B cell (primary cell): ENCODE measurements at regions of chr6 and their contacts with region 1.

Region 1: DNA sequence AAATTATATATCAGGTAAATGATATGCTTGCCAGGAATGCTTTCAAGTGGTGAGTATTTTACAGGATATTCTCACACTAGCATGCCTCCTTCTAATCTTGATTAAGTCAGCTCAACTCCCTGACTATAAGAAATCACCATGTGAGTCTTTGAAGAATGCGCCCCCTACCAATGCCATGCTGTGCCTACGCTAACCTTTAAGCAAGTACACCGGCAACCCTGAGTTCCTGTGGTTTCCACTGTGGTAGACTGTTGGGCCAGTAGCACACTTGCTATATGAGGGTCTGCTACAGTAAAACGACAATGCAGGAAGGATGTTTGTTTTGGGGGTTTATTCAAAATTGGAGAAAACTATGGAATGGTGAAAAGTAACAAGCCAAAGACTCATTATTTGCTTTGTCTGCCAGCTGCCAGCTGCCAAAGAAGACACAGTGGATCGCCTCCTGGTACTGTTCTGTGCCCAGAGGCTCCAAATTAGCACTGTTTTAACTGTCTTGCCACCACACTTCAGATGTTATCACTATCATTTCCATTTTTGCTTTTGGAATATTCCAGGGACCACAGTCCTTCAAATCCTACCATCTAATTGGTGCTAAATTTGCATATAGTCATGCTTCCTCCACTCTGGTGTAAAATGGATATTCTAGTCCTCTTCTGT is 333.5 kb downstream of the RNGTT start:
- DNase-seq: peak; percentile 59
- ATAC-seq: peak; percentile 33
- H3K4me3 ChIP-seq: no peak overlapping the region
- H3K4me3 Mint-ChIP-seq: no peak overlapping the region
- H3K27ac ChIP-seq: no peak overlapping the region
- H3K27ac Mint-ChIP-seq: peak overlapping the region; percentile 17
- H3K4me1 ChIP-seq: peaks cover 25 to 30% of the 10 kb centered on the region in 2 donors
- H3K4me1 Mint-ChIP-seq: peaks cover 45% of the 10 kb centered on the region
- H3K27me3 ChIP-seq: no peaks in the 10 kb centered on the region
- H3K27me3 Mint-ChIP-seq: no peaks in the 10 kb centered on the region
- CTCF ChIP-seq: peak; percentile 18

Region 2: DNA sequence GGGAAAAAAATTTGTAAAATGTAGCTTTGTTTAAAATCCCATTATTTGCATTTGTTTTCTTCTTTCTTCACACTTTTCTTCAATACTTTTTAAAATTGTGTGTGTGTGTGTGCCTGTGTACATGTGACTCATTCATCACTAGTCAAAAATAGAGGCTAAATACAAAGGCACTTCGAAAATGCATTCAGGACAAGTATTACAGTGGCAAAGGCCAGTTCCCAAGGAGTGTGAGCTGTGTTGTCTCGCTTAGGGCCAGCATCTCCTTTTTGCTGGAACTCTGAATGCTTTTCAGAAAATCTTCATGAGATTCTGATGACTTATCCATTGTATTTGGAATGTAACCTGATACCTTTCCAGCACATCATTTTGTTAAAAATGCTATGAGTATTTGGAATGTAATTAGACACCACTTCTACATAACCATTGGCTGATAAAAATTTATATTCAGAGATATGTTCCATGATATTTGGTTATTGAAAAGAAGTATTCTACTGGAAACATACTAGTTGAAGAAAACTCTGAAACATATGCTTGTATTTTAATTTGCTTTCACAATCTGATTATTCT is 175.2 kb before region 1 on chr6:
- CTCF ChIA-PET with region 1: no interaction called
- POLR2A ChIA-PET with region 1: no interaction called
- intact Hi-C with region 1: no loop called
- DNase-seq: no peak
- ATAC-seq: no peak
- H3K4me3 ChIP-seq: no peak overlapping the region
- H3K4me3 Mint-ChIP-seq: no peak overlapping the region
- H3K27ac ChIP-seq: no peak overlapping the region
- H3K27ac Mint-ChIP-seq: no peak overlapping the region
- H3K4me1 ChIP-seq: no peaks in the 10 kb centered on the region
- H3K4me1 Mint-ChIP-seq: no peaks in the 10 kb centered on the region
- H3K27me3 ChIP-seq: no peaks in the 10 kb centered on the region
- H3K27me3 Mint-ChIP-seq: peaks cover 24% of the 10 kb centered on the region
- CTCF ChIP-seq: no peak

Region 3: GRCh38 chr6:88641178-88641903 is 11.4 kb after region 1 on chr6:
- CTCF ChIA-PET with region 1: interaction called, 11 read pairs
- POLR2A ChIA-PET with region 1: no interaction called
- intact Hi-C with region 1: no loop called
- DNase-seq: peak; percentile 60
- ATAC-seq: peak; percentile 56
- H3K4me3 ChIP-seq: peak overlapping the region in 3 of 5 experiments; percentile 12 to 25 (median 23)
- H3K4me3 Mint-ChIP-seq: peak overlapping the region; percentile 13
- H3K27ac ChIP-seq: peak overlapping the region in 1 of 2 donors; percentile 79
- H3K27ac Mint-ChIP-seq: peak overlapping the region; percentile 46
- H3K4me1 ChIP-seq: peaks cover 14 to 24% of the 10 kb centered on the region in 2 donors
- H3K4me1 Mint-ChIP-seq: peaks cover 40% of the 10 kb centered on the region
- H3K27me3 ChIP-seq: no peaks in the 10 kb centered on the region
- H3K27me3 Mint-ChIP-seq: no peaks in the 10 kb centered on the region
- CTCF ChIP-seq: no peak

Region 4: DNA sequence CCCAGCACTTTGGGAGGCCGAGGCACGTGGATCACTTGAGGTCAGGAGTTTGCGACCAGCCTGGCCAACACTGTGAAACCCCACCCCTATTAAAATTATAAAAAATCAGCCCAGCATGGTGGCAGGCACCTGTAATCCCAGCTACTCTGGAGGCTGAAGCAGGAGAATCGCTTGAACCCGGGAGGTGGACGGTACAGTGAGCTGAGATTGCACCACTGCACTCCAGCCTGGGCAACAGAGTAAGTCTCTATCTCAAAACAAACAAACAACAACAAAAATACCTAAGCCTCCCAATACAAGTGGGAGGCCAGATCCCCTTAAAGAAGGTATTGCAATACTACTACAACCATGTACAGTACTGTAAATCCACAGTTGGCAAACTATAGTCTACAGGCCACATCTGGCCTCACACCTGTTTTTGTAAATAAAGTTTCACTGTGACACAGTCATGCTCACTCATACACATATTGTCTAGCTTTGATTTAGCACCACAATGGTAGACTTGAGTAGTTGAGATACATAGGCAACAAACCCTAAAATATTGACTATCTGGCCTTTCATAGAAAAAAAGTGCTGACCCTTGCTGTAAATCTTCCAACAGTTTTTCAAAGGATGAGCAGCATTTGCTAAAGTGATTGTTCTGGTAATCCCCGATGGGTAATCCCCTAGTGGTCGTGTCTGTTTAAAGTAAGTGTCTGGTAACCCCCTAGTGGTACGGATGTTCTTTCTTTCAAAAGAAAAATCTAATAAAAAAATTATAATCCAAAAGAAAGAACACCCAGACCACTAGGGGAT is 131.5 kb after region 1 on chr6:
- CTCF ChIA-PET with region 1: no interaction called
- POLR2A ChIA-PET with region 1: no interaction called
- intact Hi-C with region 1: loop called (anchors 10 kb)
- DNase-seq: peak; percentile 77
- ATAC-seq: peak; percentile 79
- H3K4me3 ChIP-seq: no peak overlapping the region
- H3K4me3 Mint-ChIP-seq: peak overlapping the region; percentile 1
- H3K27ac ChIP-seq: peak overlapping the region in 1 of 2 donors; percentile 70
- H3K27ac Mint-ChIP-seq: peak overlapping the region; percentile 51
- H3K4me1 ChIP-seq: peaks cover 16 to 18% of the 10 kb centered on the region in 2 donors
- H3K4me1 Mint-ChIP-seq: peaks cover 33% of the 10 kb centered on the region
- H3K27me3 ChIP-seq: no peaks in the 10 kb centered on the region
- H3K27me3 Mint-ChIP-seq: no peaks in the 10 kb centered on the region
- CTCF ChIP-seq: peak; percentile 48

Region 5: GRCh38 chr6:89729818-89730217 is 1099.9 kb after region 1 on chr6:
- CTCF ChIA-PET with region 1: no interaction called
- POLR2A ChIA-PET with region 1: no interaction called
- intact Hi-C with region 1: no loop called
- DNase-seq: no peak
- ATAC-seq: no peak
- H3K4me3 ChIP-seq: no peak overlapping the region
- H3K4me3 Mint-ChIP-seq: no peak overlapping the region
- H3K27ac ChIP-seq: no peak overlapping the region
- H3K27ac Mint-ChIP-seq: no peak overlapping the region
- H3K4me1 ChIP-seq: no peaks in the 10 kb centered on the region
- H3K4me1 Mint-ChIP-seq: no peaks in the 10 kb centered on the region
- H3K27me3 ChIP-seq: no peaks in the 10 kb centered on the region
- H3K27me3 Mint-ChIP-seq: no peaks in the 10 kb centered on the region
- CTCF ChIP-seq: no peak